Activated CD4-positive, alpha-beta memory T cell treated with anti-CD3 and anti-CD28 coated beads, Interleukin-2, amount 10 ng/mL, durations not matched to agents 7 days and 5 days (primary cell): ENCODE measurements at regions of chr16 and their contacts with region 1.

Region 1: DNA sequence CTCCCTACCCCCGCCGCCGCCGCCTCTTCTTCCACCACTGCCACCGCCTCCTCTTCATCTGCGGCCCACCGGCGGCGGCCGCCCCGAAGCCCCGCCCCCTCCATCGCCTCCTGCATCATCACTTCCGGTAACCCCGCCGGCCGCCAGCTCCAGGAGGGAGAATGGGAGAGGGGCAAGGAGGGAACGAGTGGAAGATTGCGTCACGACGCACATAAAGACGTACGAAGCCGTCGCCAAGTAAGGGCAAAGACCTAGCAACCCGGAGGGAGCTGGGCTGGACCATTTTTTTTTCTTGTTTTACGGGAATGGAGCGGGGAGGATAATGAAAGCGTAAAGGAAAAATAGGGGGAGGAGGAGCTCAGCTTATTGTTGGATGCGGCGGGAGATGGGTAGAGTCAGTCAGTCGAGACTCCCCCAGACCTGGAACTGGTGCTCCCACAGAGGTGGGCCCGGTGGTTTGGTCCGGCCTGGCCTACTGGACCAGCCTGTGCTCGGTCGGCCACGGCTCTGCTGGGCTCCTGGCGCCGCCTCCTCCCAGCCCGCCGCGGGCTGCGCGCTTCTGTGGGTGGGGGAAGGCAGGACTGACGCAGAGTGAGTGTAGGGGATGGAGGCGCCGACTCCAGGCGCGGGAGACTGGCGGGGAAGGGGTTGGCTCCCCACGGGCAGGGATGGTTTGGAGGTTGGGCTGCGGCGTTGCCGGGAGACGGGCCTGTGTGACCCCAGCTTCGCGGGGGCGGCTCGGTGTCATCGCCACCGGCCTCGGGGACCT is at the starts of genes DCUN1D3 and LYRM1:
- DNase-seq: peak; percentile 90
- H3K4me3 Mint-ChIP-seq: peak within 1 kb of the TSS; percentile 83
- H3K27ac Mint-ChIP-seq: peak within 1 kb of the TSS; percentile 93
- H3K4me1 Mint-ChIP-seq: peaks cover 79% of the 10 kb centered on the region
- H3K27me3 Mint-ChIP-seq: no peaks in the 10 kb centered on the region
- total RNA-seq, gene DCUN1D3: 20.7 to 21.6 TPM
- total RNA-seq, gene LYRM1: 45.2 to 47.0 TPM

Region 2: GRCh38 chr16:20791923-20792612 is 108.4 kb before region 1 on chr16:
- CTCF ChIA-PET with region 1: no interaction called
- POLR2A ChIA-PET with region 1: no interaction called
- DNase-seq: no peak
- H3K4me3 Mint-ChIP-seq: no peak overlapping the region
- H3K27ac Mint-ChIP-seq: no peak overlapping the region
- H3K4me1 Mint-ChIP-seq: no peaks in the 10 kb centered on the region
- H3K27me3 Mint-ChIP-seq: no peaks in the 10 kb centered on the region

Region 3: GRCh38 chr16:20806168-20807050 is 94.1 kb before region 1 on chr16 and contains the starts of genes ERI2 and REXO5:
- CTCF ChIA-PET with region 1: interaction called, 4 read pairs
- POLR2A ChIA-PET with region 1: interaction called, 13 read pairs
- DNase-seq: peak; percentile 79
- H3K4me3 Mint-ChIP-seq: peak within 1 kb of the TSS; percentile 97
- H3K27ac Mint-ChIP-seq: peak within 1 kb of the TSS; percentile 93
- H3K4me1 Mint-ChIP-seq: peaks cover 51% of the 10 kb centered on the region
- H3K27me3 Mint-ChIP-seq: no peaks in the 10 kb centered on the region
- total RNA-seq, gene ERI2: 12.4 to 13.2 TPM
- total RNA-seq, gene REXO5: 16.2 to 17.4 TPM

Region 4: GRCh38 chr16:20874088-20874581 is 26.3 kb before region 1 on chr16:
- CTCF ChIA-PET with region 1: interaction called, 22 read pairs
- POLR2A ChIA-PET with region 1: interaction called, 113 read pairs
- DNase-seq: no peak
- H3K4me3 Mint-ChIP-seq: peak overlapping the region; percentile 54
- H3K27ac Mint-ChIP-seq: peak overlapping the region; percentile 93
- H3K4me1 Mint-ChIP-seq: peaks cover 76% of the 10 kb centered on the region
- H3K27me3 Mint-ChIP-seq: no peaks in the 10 kb centered on the region

Region 5: DNA sequence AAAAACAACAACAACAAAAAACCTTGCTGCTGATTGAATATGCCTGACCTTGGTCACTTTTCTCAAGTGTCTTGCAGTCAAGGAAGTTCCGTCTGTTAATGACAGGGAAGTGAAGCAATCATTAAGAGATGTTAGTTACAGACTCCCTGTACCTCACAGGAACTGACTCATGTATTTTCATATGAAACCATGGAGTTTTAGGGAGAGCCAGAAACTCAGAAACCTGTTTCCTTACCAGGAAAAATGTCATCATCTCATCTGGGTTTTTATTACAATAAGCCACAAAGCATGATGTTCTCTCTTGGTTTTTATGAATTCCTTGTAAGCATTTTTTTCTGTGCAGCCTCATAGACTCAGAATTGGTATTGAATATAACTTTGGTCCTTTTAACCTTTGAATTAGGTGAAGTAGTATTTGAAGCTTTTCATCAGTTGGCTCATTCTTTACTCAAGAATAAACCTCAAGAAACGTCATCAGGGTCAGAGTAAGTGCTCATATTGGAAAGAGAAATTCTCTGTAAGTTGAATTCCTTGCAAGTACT is 10.4 kb after region 1 on chr16:
- CTCF ChIA-PET with region 1: interaction called, 6 read pairs
- POLR2A ChIA-PET with region 1: interaction called, 76 read pairs
- DNase-seq: no peak
- H3K4me3 Mint-ChIP-seq: peak overlapping the region; percentile 0
- H3K27ac Mint-ChIP-seq: peak overlapping the region; percentile 84
- H3K4me1 Mint-ChIP-seq: peaks cover 71% of the 10 kb centered on the region
- H3K27me3 Mint-ChIP-seq: no peaks in the 10 kb centered on the region

Region 6: DNA sequence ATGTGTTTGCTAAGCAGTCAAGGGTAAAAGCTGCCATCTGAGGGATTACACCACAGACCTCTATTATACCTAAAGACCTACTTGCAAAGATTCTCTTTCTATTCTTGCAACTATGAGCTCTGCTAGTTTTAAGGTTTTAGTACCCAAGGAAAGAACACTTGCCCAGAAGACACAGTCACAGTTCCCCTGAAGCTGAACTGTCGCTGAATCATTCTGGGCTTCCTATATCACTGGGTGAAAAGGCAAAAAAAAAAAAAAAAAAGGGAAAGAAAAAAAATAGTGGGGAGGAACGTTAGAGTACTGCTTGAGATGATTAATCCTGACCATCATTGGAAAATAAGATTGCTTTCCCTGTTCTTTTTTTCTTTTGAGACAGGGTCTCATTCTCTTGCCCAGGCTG is 37.9 kb after region 1 on chr16:
- CTCF ChIA-PET with region 1: interaction called, 7 read pairs
- POLR2A ChIA-PET with region 1: interaction called, 23 read pairs
- DNase-seq: no peak
- H3K4me3 Mint-ChIP-seq: no peak overlapping the region
- H3K27ac Mint-ChIP-seq: peak overlapping the region; percentile 72
- H3K4me1 Mint-ChIP-seq: peaks cover 49% of the 10 kb centered on the region
- H3K27me3 Mint-ChIP-seq: no peaks in the 10 kb centered on the region

Region 7: DNA sequence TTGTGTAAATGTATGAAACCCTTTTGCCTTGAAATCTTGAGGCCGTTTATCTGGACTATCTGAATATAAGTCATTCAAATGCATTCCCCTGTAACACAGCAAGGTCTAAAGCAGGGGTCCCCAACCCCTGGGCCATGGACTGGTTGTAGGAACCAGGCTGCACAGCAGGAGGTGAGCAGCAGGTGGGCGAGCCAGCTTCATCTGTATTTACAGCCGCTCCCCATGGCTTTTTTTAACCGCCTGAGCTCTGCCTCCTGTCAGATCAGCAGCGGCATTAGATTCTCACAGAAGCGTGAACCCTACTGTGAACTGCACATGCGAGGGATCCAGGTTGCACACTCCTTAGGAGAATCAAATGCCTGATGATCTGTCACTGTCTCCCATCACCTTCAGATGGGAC is 226.0 kb after region 1 on chr16:
- CTCF ChIA-PET with region 1: no interaction called
- POLR2A ChIA-PET with region 1: no interaction called
- DNase-seq: no peak
- H3K4me3 Mint-ChIP-seq: no peak overlapping the region
- H3K27ac Mint-ChIP-seq: no peak overlapping the region
- H3K4me1 Mint-ChIP-seq: no peaks in the 10 kb centered on the region
- H3K27me3 Mint-ChIP-seq: peaks cover 2% of the 10 kb centered on the region